Natural killer cell (primary cell): ENCODE measurements at regions of chr12 and their contacts with region 1.

Region 1: GRCh38 chr12:12724661-12725545 is 7.7 kb downstream of the CDKN1B start:
- DNase-seq: peak; percentile 84 to 97
- ATAC-seq: peak; percentile 55 to 78 (median 70)
- H3K4me3 ChIP-seq: peak overlapping the region; percentile 61
- H3K4me3 Mint-ChIP-seq: peak overlapping the region; percentile 100
- H3K27ac ChIP-seq: peak overlapping the region; percentile 99
- H3K27ac Mint-ChIP-seq: peak overlapping the region; percentile 99 to 100
- H3K4me1 ChIP-seq: peaks cover 29% of the 10 kb centered on the region
- H3K4me1 Mint-ChIP-seq: peaks cover 53 to 70% of the 10 kb centered on the region in 2 donors
- H3K27me3 ChIP-seq: no peaks in the 10 kb centered on the region
- H3K27me3 Mint-ChIP-seq: no peaks in the 10 kb centered on the region
- CTCF ChIP-seq: no peak

Region 2: DNA sequence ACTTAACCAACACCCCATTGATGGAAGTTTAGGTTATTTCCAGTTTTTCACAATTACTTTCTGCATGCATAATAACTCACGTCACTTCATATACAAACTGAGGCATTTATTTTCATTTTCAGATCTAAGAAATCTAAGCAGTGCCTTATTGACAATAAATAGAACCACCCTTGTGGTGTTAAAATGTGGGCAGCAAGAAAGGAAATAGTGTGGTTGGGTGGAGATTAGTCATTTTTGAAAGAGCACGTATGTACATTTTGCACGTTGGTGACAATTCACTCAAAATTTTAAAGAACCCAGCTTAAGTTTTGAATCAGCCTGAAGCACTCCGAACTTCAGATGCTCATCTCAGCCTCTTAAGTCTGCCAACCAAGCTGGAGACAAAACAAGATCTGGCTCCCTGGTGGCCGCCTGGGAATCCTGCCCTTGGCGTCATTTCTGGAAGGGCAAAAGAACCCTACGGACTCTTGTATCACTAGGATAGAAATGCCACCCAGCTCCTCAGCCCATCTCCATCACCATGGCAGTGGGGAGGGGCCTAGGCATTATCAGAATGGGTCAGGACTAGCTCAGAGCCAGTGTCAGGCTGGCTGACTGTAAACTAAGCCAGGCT is 743.7 kb before region 1 on chr12:
- intact Hi-C with region 1: loop called (anchors 10 kb)
- DNase-seq: peak; percentile 37 to 89
- ATAC-seq: peak; percentile 85 to 95 (median 91)
- H3K4me3 ChIP-seq: peak overlapping the region; percentile 20
- H3K4me3 Mint-ChIP-seq: peak overlapping the region; percentile 58
- H3K27ac ChIP-seq: peak overlapping the region; percentile 87
- H3K27ac Mint-ChIP-seq: peak overlapping the region; percentile 70 to 81
- H3K4me1 ChIP-seq: peaks cover 27% of the 10 kb centered on the region
- H3K4me1 Mint-ChIP-seq: peaks cover 41 to 43% of the 10 kb centered on the region in 2 donors
- H3K27me3 ChIP-seq: no peaks in the 10 kb centered on the region
- H3K27me3 Mint-ChIP-seq: peaks cover 28 to 42% of the 10 kb centered on the region in 2 donors
- CTCF ChIP-seq: no peak

Region 3: DNA sequence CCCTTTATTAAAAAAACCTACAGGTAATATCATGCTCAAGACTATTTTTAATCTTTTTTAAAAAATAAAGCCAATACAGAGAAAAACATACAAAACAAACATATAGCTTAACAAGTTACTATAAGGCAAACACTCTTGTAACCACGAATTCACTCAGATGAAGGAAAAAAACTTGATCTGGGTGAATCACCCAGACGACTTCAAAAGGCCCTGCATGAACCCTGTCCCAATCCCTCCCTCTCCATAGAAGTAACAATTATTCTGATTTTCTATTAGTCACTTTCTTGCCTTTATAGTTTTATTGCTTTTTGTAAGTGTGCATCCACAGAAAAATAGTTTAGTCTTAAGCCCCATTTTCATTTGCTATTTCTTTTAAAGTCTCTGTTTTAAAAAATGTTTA is 530.7 kb before region 1 on chr12:
- intact Hi-C with region 1: no loop called
- DNase-seq: no peak
- ATAC-seq: no peak
- H3K4me3 ChIP-seq: no peak overlapping the region
- H3K4me3 Mint-ChIP-seq: no peak overlapping the region
- H3K27ac ChIP-seq: no peak overlapping the region
- H3K27ac Mint-ChIP-seq: no peak overlapping the region
- H3K4me1 ChIP-seq: no peaks in the 10 kb centered on the region
- H3K4me1 Mint-ChIP-seq: no peaks in the 10 kb centered on the region
- H3K27me3 ChIP-seq: peaks cover 40% of the 10 kb centered on the region
- H3K27me3 Mint-ChIP-seq: peaks cover 68 to 86% of the 10 kb centered on the region in 2 donors
- CTCF ChIP-seq: no peak

Region 4: GRCh38 chr12:12356886-12357718 is 367.8 kb before region 1 on chr12 and contains the start of gene BORCS5:
- intact Hi-C with region 1: loop called (anchors 2 kb)
- DNase-seq: peak; percentile 95 to 99
- ATAC-seq: peak; percentile 92 to 98 (median 94)
- H3K4me3 ChIP-seq: peak within 1 kb of the TSS; percentile 78
- H3K4me3 Mint-ChIP-seq: peak within 1 kb of the TSS; percentile 96
- H3K27ac ChIP-seq: peak within 1 kb of the TSS; percentile 97
- H3K27ac Mint-ChIP-seq: peak within 1 kb of the TSS; percentile 92 to 97
- H3K4me1 ChIP-seq: peaks cover 23% of the 10 kb centered on the region
- H3K4me1 Mint-ChIP-seq: peaks cover 26 to 31% of the 10 kb centered on the region in 2 donors
- H3K27me3 ChIP-seq: no peaks in the 10 kb centered on the region
- H3K27me3 Mint-ChIP-seq: no peaks in the 10 kb centered on the region
- CTCF ChIP-seq: no peak
- total RNA-seq, gene BORCS5: 28.5 to 32.8 (median 29.2) TPM

Region 5: GRCh38 chr12:12611512-12612306 is 113.2 kb before region 1 on chr12 and contains the start of gene CREBL2:
- intact Hi-C with region 1: loop called (anchors 5 kb)
- DNase-seq: peak; percentile 84 to 94
- ATAC-seq: peak; percentile 93 to 97 (median 94)
- H3K4me3 ChIP-seq: peak within 1 kb of the TSS; percentile 84
- H3K4me3 Mint-ChIP-seq: peak within 1 kb of the TSS; percentile 90
- H3K27ac ChIP-seq: peak within 1 kb of the TSS; percentile 87
- H3K27ac Mint-ChIP-seq: peak within 1 kb of the TSS; percentile 90 to 98
- H3K4me1 ChIP-seq: peaks cover 17% of the 10 kb centered on the region
- H3K4me1 Mint-ChIP-seq: peaks cover 34 to 36% of the 10 kb centered on the region in 2 donors
- H3K27me3 ChIP-seq: no peaks in the 10 kb centered on the region
- H3K27me3 Mint-ChIP-seq: no peaks in the 10 kb centered on the region
- CTCF ChIP-seq: no peak
- total RNA-seq, gene CREBL2: 9.0 to 13.1 (median 10.7) TPM

Region 6: GRCh38 chr12:12696562-12697383 is 28.1 kb before region 1 on chr12:
- intact Hi-C with region 1: loop called (anchors 1 kb)
- DNase-seq: peak; percentile 91 to 97
- ATAC-seq: peak; percentile 85 to 93 (median 89)
- H3K4me3 ChIP-seq: peak overlapping the region; percentile 68
- H3K4me3 Mint-ChIP-seq: peak overlapping the region; percentile 93
- H3K27ac ChIP-seq: peak overlapping the region; percentile 98
- H3K27ac Mint-ChIP-seq: peak overlapping the region; percentile 99 to 100
- H3K4me1 ChIP-seq: no peaks in the 10 kb centered on the region
- H3K4me1 Mint-ChIP-seq: peaks cover 26 to 27% of the 10 kb centered on the region in 2 donors
- H3K27me3 ChIP-seq: no peaks in the 10 kb centered on the region
- H3K27me3 Mint-ChIP-seq: no peaks in the 10 kb centered on the region
- CTCF ChIP-seq: no peak

Region 7: GRCh38 chr12:12736759-12737676 is 12.1 kb after region 1 on chr12:
- intact Hi-C with region 1: loop called (anchors 1 kb)
- DNase-seq: peak; percentile 59 to 80
- ATAC-seq: peak; percentile 85 to 93 (median 91)
- H3K4me3 ChIP-seq: peak overlapping the region; percentile 43
- H3K4me3 Mint-ChIP-seq: peak overlapping the region; percentile 77
- H3K27ac ChIP-seq: peak overlapping the region; percentile 92
- H3K27ac Mint-ChIP-seq: peak overlapping the region; percentile 94
- H3K4me1 ChIP-seq: peaks cover 30% of the 10 kb centered on the region
- H3K4me1 Mint-ChIP-seq: peaks cover 31% of the 10 kb centered on the region in 2 donors
- H3K27me3 ChIP-seq: no peaks in the 10 kb centered on the region
- H3K27me3 Mint-ChIP-seq: no peaks in the 10 kb centered on the region
- CTCF ChIP-seq: peak; percentile 73